Panc1 (cell line): ENCODE measurements at regions of chr1 and their contacts with region 1.

Region 1: DNA sequence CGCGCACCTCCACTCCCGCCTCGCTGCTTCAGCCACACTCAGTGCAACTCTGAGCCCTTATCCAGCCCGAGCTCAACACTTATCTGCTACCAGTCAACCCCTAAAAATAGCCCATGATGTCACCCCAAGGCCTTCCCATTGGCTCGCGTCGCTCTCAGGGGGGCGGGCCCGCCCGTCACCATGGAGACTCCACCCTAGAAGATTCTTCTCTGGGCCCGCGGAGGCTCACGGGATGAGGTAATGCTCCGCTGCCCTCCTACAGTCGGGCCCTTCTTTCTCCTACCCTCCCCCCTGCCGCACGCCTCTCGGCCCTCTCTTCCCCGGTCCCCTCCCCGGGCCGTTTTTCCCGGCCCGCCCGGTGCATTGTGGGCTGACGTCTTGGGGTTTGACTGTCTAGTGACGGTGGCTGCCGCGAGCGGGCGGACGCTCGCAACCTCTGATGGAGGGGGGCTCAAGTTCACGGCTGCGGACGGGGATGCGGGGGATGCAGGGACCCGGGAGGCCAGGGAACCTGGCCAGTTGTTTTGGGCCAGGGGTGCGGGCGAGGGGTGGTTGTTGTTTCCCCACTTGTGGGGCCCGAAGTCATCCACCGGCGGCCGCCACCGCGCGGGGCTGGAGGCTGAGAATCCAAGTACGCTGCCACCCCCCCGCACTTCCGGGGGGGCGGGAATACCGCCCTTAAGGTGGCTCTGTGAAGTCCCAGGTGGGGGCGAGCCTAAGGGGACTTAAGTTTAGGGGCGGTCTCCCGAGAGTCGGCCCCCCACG is at the start of gene JUN:
- DNase-seq: peak; percentile 99
- ATAC-seq: peak; percentile 86
- H3K4me3 ChIP-seq: peak within 1 kb of the TSS; percentile 75 to 88
- H3K27ac ChIP-seq: peak within 1 kb of the TSS; percentile 93
- H3K4me1 ChIP-seq: peaks cover 26% of the 10 kb centered on the region
- H3K27me3 ChIP-seq: no peaks in the 10 kb centered on the region
- CTCF ChIP-seq: no peak
- total RNA-seq, gene JUN: 70.0 TPM

Region 2: DNA sequence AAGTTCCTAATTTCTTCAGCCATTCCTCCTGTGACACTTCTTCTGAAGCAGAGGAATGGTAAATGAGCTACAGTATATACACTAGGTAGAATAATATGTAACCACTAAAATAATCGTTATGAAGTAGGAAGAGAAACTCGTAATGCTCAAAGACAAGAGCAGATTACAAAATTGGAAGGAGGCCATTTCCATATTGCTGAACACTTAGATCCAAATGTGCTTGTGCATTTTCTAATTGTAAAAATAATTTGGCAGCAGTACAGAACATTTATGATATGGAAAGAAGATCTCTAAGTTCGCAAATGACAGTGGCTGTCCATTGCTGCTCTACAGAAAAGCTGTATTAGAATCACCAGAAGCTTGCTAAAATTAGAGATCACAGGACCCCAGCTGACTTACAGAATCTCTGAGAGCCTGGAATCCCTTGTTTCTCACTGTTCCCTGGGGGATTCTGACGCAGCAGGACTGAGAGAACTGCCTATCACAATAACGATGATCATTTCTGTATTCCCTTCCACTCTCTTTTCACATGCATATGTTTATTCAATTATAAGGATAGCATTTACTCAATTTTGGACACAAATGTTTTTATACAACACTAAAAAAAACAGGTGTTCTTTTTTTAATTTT is 479.7 kb before region 1 on chr1:
- CTCF ChIA-PET with region 1: no interaction called
- POLR2A ChIA-PET with region 1: no interaction called
- in situ Hi-C with region 1: no loop called
- intact Hi-C with region 1: no loop called
- DNase-seq: no peak
- ATAC-seq: no peak
- H3K4me3 ChIP-seq: no peak overlapping the region
- H3K27ac ChIP-seq: no peak overlapping the region
- H3K4me1 ChIP-seq: no peaks in the 10 kb centered on the region
- H3K27me3 ChIP-seq: no peaks in the 10 kb centered on the region; the same call in 1 of the 2 replicates
- CTCF ChIP-seq: no peak

Region 3: GRCh38 chr1:58739856-58740466 is 44.2 kb before region 1 on chr1:
- CTCF ChIA-PET with region 1: interaction called, 4 read pairs
- POLR2A ChIA-PET with region 1: interaction called, 11 read pairs
- in situ Hi-C with region 1: no loop called
- intact Hi-C with region 1: no loop called
- DNase-seq: peak; percentile 42
- ATAC-seq: peak; percentile 83
- H3K4me3 ChIP-seq: no peak overlapping the region
- H3K27ac ChIP-seq: peak overlapping the region; percentile 34; the same call in 1 of the 2 replicates
- H3K4me1 ChIP-seq: peaks cover 4% of the 10 kb centered on the region
- H3K27me3 ChIP-seq: no peaks in the 10 kb centered on the region
- CTCF ChIP-seq: peak; percentile 74; the same call in 1 of the 2 replicates

Region 4: DNA sequence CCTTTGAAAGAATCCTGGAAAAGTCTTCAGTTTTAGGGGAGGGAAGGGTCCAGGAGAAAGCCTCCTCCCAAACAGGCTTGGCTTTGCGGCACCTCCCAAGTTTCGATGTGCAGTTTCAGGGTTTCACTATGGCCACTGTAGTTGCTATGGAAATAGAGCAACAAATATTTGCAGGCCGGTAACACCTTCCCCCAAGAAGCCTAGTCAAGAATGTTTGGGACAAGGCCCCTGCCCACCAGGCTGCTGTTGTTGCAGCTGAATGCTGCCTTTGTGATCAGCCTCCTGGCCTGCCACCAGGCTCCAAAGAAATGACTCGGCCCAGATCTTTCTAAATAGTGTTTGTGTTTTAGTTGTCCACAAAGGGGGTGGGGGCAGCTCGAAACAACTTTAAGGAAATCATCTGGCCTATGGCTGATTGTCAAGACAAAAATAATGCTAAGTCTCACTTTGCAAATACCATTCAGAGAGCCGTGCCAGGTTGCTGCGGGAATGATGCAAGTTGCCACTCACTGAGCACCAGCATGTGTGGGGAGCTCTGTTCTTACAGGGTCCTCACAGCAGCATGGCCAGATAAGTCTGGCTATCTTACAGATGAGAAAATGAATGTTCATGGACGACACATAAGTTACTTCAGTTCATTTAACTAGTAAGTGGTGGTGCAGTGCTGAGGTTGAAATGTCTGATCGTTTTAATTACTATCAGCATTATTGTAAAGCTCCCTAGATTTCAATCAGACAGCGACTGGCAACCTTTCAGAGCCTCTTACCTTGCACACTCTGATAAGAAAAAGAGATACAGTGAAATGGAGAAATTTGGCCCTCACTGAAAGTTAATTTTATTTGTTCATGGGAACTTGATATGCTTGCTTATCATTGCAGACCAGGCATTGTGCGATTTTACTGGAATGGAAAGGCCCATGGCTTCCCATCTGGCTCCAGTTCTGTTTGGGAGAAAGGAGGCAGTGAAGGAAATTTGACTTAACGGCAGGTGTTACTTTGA is 90.9 kb after region 1 on chr1:
- CTCF ChIA-PET with region 1: no interaction called
- POLR2A ChIA-PET with region 1: no interaction called
- in situ Hi-C with region 1: no loop called
- intact Hi-C with region 1: no loop called
- DNase-seq: no peak
- ATAC-seq: peak; percentile 56
- H3K4me3 ChIP-seq: no peak overlapping the region; a peak in 1 of 4 replicates
- H3K27ac ChIP-seq: peak overlapping the region; percentile 58
- H3K4me1 ChIP-seq: peaks cover 24% of the 10 kb centered on the region
- H3K27me3 ChIP-seq: no peaks in the 10 kb centered on the region
- CTCF ChIP-seq: no peak

Region 5: DNA sequence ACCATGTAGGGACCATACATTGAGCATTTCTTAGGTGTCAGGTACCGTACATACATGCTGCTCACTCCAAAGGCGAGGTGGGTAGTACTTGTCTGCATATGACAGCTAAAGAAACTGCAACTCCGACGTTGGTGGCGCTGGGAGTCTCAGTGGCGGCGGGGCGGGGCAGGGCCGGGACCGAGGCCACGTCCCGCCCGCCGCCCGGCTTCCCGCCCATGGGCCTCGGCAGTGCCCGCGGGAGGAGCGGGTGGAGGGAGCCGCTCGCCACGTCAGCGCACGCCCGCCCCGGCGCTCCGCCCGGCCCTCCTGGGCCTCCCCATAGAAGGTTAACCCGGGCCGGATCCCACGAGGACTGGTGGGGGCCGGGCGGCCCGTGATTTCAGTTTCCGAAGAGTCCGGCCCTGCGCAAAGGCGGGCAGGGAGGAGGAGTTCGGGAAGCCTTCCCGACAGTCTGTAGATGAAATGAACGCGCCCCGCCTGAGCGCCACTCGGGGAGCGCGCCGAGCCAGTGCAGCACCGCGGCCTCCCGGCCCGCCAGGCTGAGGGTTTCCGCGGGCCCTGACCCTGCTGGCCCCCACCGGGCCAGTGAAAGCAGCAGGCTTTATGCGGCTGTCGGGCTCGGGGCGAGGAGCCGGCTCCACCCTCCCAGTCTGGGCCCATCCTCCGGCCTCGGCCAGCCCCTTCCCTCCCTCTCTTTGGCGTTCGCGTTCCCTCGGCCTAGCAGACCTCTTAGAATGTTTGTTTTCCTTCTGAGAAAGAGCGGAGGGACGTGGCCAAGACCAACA is 119.5 kb after region 1 on chr1:
- CTCF ChIA-PET with region 1: interaction called, 6 read pairs
- POLR2A ChIA-PET with region 1: no interaction called
- in situ Hi-C with region 1: no loop called
- intact Hi-C with region 1: loop called (anchors 5 kb)
- DNase-seq: no peak
- ATAC-seq: peak; percentile 97
- H3K4me3 ChIP-seq: peak overlapping the region; percentile 59 to 72
- H3K27ac ChIP-seq: peak overlapping the region; percentile 92
- H3K4me1 ChIP-seq: peaks cover 23% of the 10 kb centered on the region
- H3K27me3 ChIP-seq: no peaks in the 10 kb centered on the region
- CTCF ChIP-seq: no peak

Region 6: DNA sequence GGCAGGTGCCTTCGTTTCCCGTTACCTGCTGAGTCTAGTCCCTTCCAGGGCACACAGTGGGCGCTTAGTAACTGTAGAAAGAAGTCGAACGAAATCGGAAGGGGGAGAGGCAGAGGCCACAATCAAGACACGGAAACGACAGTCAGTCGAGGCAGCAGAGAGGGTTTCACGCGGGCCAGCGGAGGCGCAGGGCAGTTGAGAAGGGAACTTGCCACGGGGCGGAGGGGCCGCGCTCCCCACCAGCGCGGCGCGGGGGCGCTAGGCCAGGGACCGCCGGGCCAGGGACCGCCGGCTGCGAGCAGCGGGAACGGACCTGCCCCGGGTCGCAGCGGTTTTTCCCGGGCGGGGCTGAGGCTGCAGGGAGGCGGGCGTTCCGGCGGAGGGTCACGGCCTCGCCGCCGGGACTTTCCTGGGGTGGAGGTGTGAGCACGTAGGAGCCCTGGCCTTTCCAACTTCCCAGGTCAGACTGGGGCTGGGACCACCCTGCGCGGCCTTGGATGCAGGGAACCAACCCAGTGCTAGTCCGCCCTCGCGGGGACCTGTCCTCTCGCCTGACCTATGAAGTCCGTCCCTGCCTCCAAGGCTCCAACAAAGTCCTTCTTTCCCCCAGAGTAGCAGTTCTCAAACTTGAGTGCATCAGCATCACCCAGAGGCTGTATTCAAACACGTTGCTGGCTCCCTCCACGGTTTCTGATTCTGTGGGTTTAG is 362.6 kb after region 1 on chr1:
- CTCF ChIA-PET with region 1: no interaction called
- POLR2A ChIA-PET with region 1: no interaction called
- in situ Hi-C with region 1: no loop called
- intact Hi-C with region 1: loop called (anchors 5 kb)
- DNase-seq: no peak
- ATAC-seq: peak; percentile 81
- H3K4me3 ChIP-seq: peak overlapping the region; percentile 52 to 74
- H3K27ac ChIP-seq: peak overlapping the region; percentile 89
- H3K4me1 ChIP-seq: peaks cover 45% of the 10 kb centered on the region
- H3K27me3 ChIP-seq: no peaks in the 10 kb centered on the region
- CTCF ChIP-seq: peak; percentile 29

Region 7: GRCh38 chr1:59296358-59297256 is 512.4 kb after region 1 on chr1 and contains the start of gene FGGY:
- CTCF ChIA-PET with region 1: no interaction called
- POLR2A ChIA-PET with region 1: interaction called, 4 read pairs
- in situ Hi-C with region 1: no loop called
- intact Hi-C with region 1: loop called (anchors 2 kb)
- DNase-seq: peak; percentile 89
- ATAC-seq: peak; percentile 97
- H3K4me3 ChIP-seq: peak within 1 kb of the TSS; percentile 85 to 97
- H3K27ac ChIP-seq: peak within 1 kb of the TSS; percentile 100
- H3K4me1 ChIP-seq: peaks cover 16% of the 10 kb centered on the region
- H3K27me3 ChIP-seq: no peaks in the 10 kb centered on the region
- CTCF ChIP-seq: no peak
- total RNA-seq, gene FGGY: 15.5 TPM

Region 8: GRCh38 chr1:59699227-59699847 is 915.2 kb after region 1 on chr1:
- CTCF ChIA-PET with region 1: no interaction called
- POLR2A ChIA-PET with region 1: no interaction called
- in situ Hi-C with region 1: no loop called
- intact Hi-C with region 1: loop called (anchors 5 kb)
- DNase-seq: peak; percentile 45
- ATAC-seq: no peak
- H3K4me3 ChIP-seq: no peak overlapping the region
- H3K27ac ChIP-seq: no peak overlapping the region; the same call in 1 of the 2 replicates
- H3K4me1 ChIP-seq: no peaks in the 10 kb centered on the region
- H3K27me3 ChIP-seq: no peaks in the 10 kb centered on the region
- CTCF ChIP-seq: peak; percentile 88